Ovary (tissue), 10 donors: ENCODE measurements at regions of chr3 and their contacts with region 1.

Region 1: DNA sequence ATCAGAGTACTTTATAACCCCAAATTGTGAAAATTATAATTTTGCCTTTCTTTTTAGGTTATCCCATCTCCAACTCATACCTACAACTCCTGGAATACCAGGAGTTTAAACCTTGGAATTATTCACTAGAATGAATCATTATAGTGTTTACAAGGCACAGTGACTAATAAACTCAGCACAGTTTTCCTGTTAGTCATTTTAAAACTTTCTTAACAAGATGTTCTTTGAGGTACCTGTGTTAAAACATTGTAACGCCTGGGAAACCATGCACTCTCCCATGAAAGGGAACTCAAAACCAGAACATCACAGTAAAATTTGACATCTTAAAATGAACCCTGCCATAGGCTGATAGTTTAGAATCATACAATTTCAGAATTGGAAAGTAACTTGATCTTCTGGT is 132.4 kb upstream of the OSTN start:
- DNase-seq: no peak
- H3K4me3 ChIP-seq: no peak overlapping the region
- H3K27ac ChIP-seq: no peak overlapping the region
- H3K4me1 ChIP-seq: no peaks in the 10 kb centered on the region
- H3K27me3 ChIP-seq: no peaks in the 10 kb centered on the region
- CTCF ChIP-seq: no peak
- EP300 ChIP-seq: no peak
- POLR2A ChIP-seq: no peak

Region 2: DNA sequence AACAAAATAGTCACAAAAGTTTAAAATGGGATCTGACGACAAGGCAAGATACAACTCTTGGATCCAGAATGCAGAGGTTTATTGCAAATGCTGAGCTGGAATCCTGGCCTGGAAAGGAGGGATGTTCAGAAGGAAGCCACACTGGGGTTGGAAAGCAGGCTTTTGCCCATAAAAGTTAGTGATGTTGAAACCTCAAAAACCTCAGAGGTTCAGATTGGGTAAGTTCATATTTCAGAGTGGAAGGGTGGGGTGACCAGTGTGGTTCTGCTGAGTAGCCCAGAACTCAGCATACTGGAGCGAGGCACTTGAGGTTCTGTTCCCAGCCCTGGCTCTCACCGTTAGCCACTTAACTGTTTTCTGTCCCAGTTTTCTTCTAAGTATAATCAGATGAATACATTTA is 18.4 kb after region 1 on chr3:
- intact Hi-C with region 1: loop called in 1 of 4 experiments (anchors 2 kb)
- DNase-seq: no peak
- H3K4me3 ChIP-seq: no peak overlapping the region
- H3K27ac ChIP-seq: no peak overlapping the region
- H3K4me1 ChIP-seq: no peaks in the 10 kb centered on the region
- H3K27me3 ChIP-seq: no peaks in the 10 kb centered on the region
- CTCF ChIP-seq: no peak
- EP300 ChIP-seq: no peak
- POLR2A ChIP-seq: no peak

Region 3: DNA sequence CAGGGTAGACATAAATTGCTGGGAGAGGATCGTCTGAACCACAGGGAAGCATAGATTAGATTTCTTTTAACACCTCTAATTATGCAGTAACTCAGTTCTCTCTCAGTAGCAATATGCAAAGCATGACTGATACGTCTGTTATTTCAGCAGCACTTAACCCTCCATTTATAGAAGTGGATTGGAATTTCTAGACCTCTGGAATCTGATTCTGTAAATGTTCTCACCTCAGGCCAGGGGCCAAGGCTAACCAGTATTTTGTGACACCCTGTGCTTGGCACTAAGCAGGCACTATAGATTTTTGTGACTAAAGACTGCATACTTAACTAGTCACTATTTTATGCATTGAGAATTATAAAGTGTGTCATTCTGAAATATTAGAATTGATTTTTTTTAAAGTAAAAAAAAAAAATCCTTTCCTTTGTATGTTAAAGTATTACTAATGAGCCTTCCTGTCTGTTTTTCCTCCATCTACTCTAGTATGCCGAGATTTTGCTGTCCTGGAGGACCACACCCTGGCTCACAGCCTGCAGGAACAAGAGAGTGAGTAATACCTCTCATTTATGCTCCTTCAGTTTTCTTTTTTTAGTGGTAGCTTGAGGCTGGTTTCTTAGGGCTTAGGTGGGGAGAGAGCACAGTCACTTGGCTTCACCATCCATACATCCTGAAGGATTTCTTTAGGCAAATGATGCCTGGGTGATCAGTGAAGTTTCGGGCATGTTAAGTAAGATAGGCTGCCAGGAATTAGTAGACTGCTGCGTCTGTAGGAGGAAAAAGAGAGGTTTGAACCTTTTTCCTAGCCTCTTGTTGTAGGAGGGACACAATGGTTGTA is 290.2 kb after region 1 on chr3:
- intact Hi-C with region 1: no loop called
- DNase-seq: peak in 2 of 5 donors; percentile 24 to 31
- H3K4me3 ChIP-seq: no peak overlapping the region
- H3K27ac ChIP-seq: no peak overlapping the region
- H3K4me1 ChIP-seq: peaks cover 8% of the 10 kb centered on the region
- H3K27me3 ChIP-seq: no peaks in the 10 kb centered on the region
- CTCF ChIP-seq: no peak
- EP300 ChIP-seq: no peak
- POLR2A ChIP-seq: no peak

Region 4: DNA sequence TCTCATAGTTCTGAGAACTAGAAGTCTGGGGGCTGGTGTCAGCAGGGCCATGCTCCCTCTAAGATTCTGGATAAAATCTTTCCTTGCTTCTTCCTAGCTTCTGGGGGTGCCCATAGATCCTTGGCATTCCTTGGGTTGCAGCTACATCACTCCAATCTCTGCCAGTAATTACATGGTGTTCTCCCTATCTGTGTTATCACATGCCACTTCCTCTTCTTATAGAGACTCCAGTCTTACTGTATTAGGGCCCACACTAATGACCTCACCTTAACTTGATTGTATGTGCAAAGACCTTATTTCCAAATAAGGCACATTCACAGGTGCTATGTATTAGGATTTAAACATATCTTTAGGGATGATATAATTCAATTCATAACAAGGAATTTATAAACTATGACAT is 1042.2 kb after region 1 on chr3:
- intact Hi-C with region 1: no loop called
- DNase-seq: no peak
- H3K4me3 ChIP-seq: no peak overlapping the region
- H3K27ac ChIP-seq: no peak overlapping the region
- H3K4me1 ChIP-seq: no peaks in the 10 kb centered on the region
- H3K27me3 ChIP-seq: no peaks in the 10 kb centered on the region
- CTCF ChIP-seq: no peak
- EP300 ChIP-seq: no peak
- POLR2A ChIP-seq: no peak